GM10248 (cell line): ENCODE measurements at regions of chr4 and their contacts with region 1.

Region 1: GRCh38 chr4:189792924-189793618 is 147.6 kb upstream of the FRG1 start:
- DNase-seq: peak; percentile 60
- CTCF ChIP-seq: peak; percentile 85

Region 2: GRCh38 chr4:189519186-189519585 is 273.9 kb before region 1 on chr4:
- CTCF ChIA-PET with region 1: no interaction called
- POLR2A ChIA-PET with region 1: no interaction called
- DNase-seq: no peak
- CTCF ChIP-seq: no peak

Region 3: DNA sequence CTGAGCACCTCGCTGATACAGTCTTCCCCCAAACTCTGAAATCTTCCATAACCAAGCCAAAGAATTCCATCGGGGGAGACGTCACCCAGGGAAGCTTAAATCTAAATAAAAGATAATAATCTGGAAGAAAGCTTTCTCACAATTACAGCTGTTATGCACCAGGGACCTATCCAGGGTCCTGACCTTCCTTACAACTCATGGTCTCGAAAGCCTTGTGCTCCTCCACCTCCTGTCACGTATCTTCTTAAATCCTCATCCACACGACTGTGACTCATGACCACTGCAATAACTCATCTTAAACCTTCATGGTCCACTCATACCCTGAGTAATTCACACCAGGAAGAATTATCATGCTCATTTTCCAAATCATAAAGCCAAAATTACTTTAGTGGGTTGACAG is 19.2 kb before region 1 on chr4:
- CTCF ChIA-PET with region 1: interaction called, 15 read pairs
- POLR2A ChIA-PET with region 1: no interaction called
- DNase-seq: no peak
- CTCF ChIP-seq: no peak

Region 4: GRCh38 chr4:189823591-189823990 is 30.5 kb after region 1 on chr4:
- CTCF ChIA-PET with region 1: interaction called, 13 read pairs
- POLR2A ChIA-PET with region 1: no interaction called
- DNase-seq: no peak
- CTCF ChIP-seq: no peak